Activated B cell treated with CpG ODN at 0.5 μM for 24 hours (primary cell): ENCODE measurements at regions of chr1 and their contacts with region 1.

Region 1: GRCh38 chr1:101257500-101258325 is 20.9 kb downstream of the S1PR1 start:
- DNase-seq: no peak
- ATAC-seq: peak; percentile 61
- H3K4me3 Mint-ChIP-seq: no peak overlapping the region
- H3K27ac Mint-ChIP-seq: peak overlapping the region; percentile 42
- H3K4me1 Mint-ChIP-seq: peaks cover 51% of the 10 kb centered on the region
- H3K27me3 Mint-ChIP-seq: no peaks in the 10 kb centered on the region
- CTCF ChIP-seq: no peak

Region 2: GRCh38 chr1:101247404-101248287 is 10.1 kb before region 1 on chr1:
- CTCF ChIA-PET with region 1: no interaction called
- POLR2A ChIA-PET with region 1: interaction called, 12 read pairs
- intact Hi-C with region 1: loop called (anchors 1 kb)
- DNase-seq: no peak
- ATAC-seq: peak; percentile 89
- H3K4me3 Mint-ChIP-seq: peak overlapping the region; percentile 44
- H3K27ac Mint-ChIP-seq: peak overlapping the region; percentile 82
- H3K4me1 Mint-ChIP-seq: peaks cover 82% of the 10 kb centered on the region
- H3K27me3 Mint-ChIP-seq: no peaks in the 10 kb centered on the region
- CTCF ChIP-seq: no peak

Region 3: DNA sequence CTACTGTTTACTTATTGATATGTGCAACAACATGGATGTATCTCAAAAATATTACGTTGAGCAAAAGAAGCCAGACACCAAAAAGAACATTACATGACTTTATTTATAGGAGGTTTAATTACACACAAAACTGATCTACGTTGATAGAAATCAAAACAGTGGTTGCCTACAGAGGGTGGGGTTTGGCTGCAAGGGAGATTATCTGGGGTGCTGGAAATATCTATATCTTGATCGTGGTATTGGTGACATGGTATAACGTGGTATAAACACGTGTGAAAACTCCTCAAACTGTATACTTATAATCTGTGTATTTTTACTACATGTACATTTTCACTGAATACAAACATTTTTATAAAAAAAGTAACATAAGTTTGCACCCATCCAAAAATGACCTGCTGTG is 18.0 kb after region 1 on chr1:
- CTCF ChIA-PET with region 1: no interaction called
- POLR2A ChIA-PET with region 1: interaction called, 4 read pairs
- intact Hi-C with region 1: loop called (anchors 2 kb)
- DNase-seq: no peak
- ATAC-seq: no peak
- H3K4me3 Mint-ChIP-seq: no peak overlapping the region
- H3K27ac Mint-ChIP-seq: no peak overlapping the region
- H3K4me1 Mint-ChIP-seq: peaks cover 35% of the 10 kb centered on the region
- H3K27me3 Mint-ChIP-seq: no peaks in the 10 kb centered on the region
- CTCF ChIP-seq: no peak